ENCODE measurements at regions of chr1 and their contacts with region 1.

Region 1: DNA sequence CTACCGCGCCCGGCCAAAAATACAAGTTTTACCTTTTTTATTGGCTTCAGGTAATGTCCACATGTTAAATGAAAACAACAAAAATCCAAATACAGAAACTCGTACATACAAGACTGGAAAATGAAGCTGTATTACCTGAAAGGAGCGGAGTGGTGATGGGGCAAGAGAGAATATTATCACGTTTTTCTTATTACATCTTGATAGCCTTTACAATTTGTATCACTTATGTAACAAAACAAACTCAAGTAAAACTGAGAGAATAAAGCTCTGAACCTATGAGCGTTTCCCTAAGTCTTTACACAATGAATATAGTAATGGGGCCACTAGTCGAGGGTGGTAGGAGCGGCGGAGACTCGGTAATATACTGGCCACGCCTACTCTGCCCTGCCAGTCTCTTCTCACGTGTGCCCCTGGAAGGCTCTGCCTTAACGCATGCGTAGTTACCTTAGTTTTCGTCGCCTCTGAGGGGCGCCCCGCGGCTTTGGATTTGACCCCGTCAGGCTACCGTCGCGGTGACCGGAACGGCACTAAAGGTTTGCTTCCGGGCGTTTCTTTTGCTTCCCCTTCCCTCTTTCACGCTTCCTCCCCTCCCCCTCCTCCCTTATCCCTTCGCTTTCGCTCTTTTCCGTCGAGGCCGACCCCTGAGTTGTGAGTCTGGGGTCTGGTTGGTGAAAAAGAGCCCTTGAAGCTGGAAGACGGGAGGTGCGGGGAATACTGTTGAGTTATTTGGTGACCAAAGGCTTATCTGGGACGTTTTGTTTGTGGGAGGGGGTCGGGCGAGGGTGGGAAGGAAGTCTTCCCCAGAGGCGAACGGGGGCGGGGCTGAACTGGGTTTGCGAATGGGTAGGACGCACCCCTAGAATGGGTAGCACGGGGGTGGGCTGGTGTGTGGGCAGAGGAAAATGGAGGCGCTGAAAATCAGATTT is at the start of gene SETDB1:
- DNase-seq: peak; percentile 79 to 97 (median 88)
- ATAC-seq: peak; percentile 93
- H3K4me3 ChIP-seq: peak within 1 kb of the TSS; percentile 89
- H3K4me3 Mint-ChIP-seq: peak within 1 kb of the TSS; percentile 94
- H3K27ac ChIP-seq: peak within 1 kb of the TSS; percentile 86 to 88
- H3K27ac Mint-ChIP-seq: peak within 1 kb of the TSS; percentile 92
- H3K4me1 ChIP-seq: peaks cover 15% of the 10 kb centered on the region
- H3K4me1 Mint-ChIP-seq: peaks cover 33% of the 10 kb centered on the region
- H3K27me3 ChIP-seq: no peaks in the 10 kb centered on the region
- H3K27me3 Mint-ChIP-seq: no peaks in the 10 kb centered on the region
- CTCF ChIP-seq: no peak
- total RNA-seq, gene SETDB1: 39.4 to 40.4 TPM

Region 2: GRCh38 chr1:150464422-150464826 is 461.7 kb before region 1 on chr1:
- CTCF ChIA-PET with region 1: no interaction called
- POLR2A ChIA-PET with region 1: no interaction called
- intact Hi-C with region 1: loop called in 1 of 2 experiments (anchors 5 kb)
- DNase-seq: peak; percentile 45 to 85 (median 63)
- ATAC-seq: peak; percentile 94
- H3K4me3 ChIP-seq: no peak overlapping the region
- H3K4me3 Mint-ChIP-seq: no peak overlapping the region
- H3K27ac ChIP-seq: no peak overlapping the region
- H3K27ac Mint-ChIP-seq: peak overlapping the region; percentile 7
- H3K4me1 ChIP-seq: no peaks in the 10 kb centered on the region
- H3K4me1 Mint-ChIP-seq: peaks cover 5% of the 10 kb centered on the region
- H3K27me3 ChIP-seq: no peaks in the 10 kb centered on the region
- H3K27me3 Mint-ChIP-seq: no peaks in the 10 kb centered on the region
- CTCF ChIP-seq: peak; percentile 79

Region 3: GRCh38 chr1:150696590-150697524 is 229.2 kb before region 1 on chr1 and contains the start of gene GOLPH3L:
- CTCF ChIA-PET with region 1: interaction called, 3 read pairs
- POLR2A ChIA-PET with region 1: interaction called, 3 read pairs
- intact Hi-C with region 1: loop called in 1 of 2 experiments (anchors 2 kb)
- DNase-seq: peak; percentile 73 to 98 (median 83)
- ATAC-seq: peak; percentile 99
- H3K4me3 ChIP-seq: peak within 1 kb of the TSS; percentile 69
- H3K4me3 Mint-ChIP-seq: peak within 1 kb of the TSS; percentile 94
- H3K27ac ChIP-seq: peak within 1 kb of the TSS; percentile 39 to 62
- H3K27ac Mint-ChIP-seq: peak within 1 kb of the TSS; percentile 88
- H3K4me1 ChIP-seq: no peaks in the 10 kb centered on the region
- H3K4me1 Mint-ChIP-seq: peaks cover 40% of the 10 kb centered on the region
- H3K27me3 ChIP-seq: no peaks in the 10 kb centered on the region
- H3K27me3 Mint-ChIP-seq: peaks cover 4% of the 10 kb centered on the region
- CTCF ChIP-seq: no peak
- total RNA-seq, gene GOLPH3L: 2.4 to 2.6 TPM

Region 4: DNA sequence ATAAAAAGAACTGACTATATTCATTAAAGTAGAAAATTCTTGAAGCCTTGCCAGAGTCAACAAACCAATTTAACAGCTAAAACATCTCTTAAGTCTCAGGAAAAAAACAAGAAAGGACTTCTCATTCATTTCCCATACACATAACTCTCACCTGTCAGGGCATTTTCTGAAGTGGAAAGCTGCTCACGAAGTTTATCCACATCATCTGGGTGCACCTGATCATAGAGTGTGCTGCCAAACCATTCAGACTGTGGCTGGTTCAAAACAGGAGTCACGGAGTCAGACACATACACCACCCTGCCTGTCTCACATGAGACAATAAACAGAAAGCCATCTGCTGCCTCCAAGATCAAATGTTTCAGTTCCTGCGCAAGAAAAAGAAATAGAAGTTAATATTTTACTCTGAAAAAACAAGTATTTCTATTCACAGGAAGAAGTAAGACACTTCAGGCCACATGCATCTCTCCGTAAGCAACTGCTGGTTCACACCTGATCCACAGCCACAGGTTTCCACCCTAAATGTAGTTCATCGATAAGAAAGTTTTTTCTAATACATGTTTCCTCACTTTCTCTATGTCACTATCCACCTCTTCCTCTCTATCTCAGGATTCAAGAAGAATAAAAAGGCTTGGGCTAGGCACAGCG is 89.8 kb before region 1 on chr1:
- CTCF ChIA-PET with region 1: interaction called, 3 read pairs
- POLR2A ChIA-PET with region 1: no interaction called
- intact Hi-C with region 1: loop called (anchors 5 kb)
- DNase-seq: no peak
- ATAC-seq: no peak
- H3K4me3 ChIP-seq: no peak overlapping the region
- H3K4me3 Mint-ChIP-seq: no peak overlapping the region
- H3K27ac ChIP-seq: no peak overlapping the region
- H3K27ac Mint-ChIP-seq: no peak overlapping the region
- H3K4me1 ChIP-seq: peaks cover 8% of the 10 kb centered on the region
- H3K4me1 Mint-ChIP-seq: peaks cover 7% of the 10 kb centered on the region
- H3K27me3 ChIP-seq: no peaks in the 10 kb centered on the region
- H3K27me3 Mint-ChIP-seq: no peaks in the 10 kb centered on the region
- CTCF ChIP-seq: no peak

Region 5: GRCh38 chr1:150841626-150842025 is 84.5 kb before region 1 on chr1:
- CTCF ChIA-PET with region 1: interaction called, 7 read pairs
- POLR2A ChIA-PET with region 1: no interaction called
- intact Hi-C with region 1: loop called (anchors 5 kb)
- DNase-seq: peak in 3 of 14 experiments; percentile 53 to 62 (median 56)
- ATAC-seq: peak; percentile 87
- H3K4me3 ChIP-seq: no peak overlapping the region
- H3K4me3 Mint-ChIP-seq: no peak overlapping the region
- H3K27ac ChIP-seq: no peak overlapping the region
- H3K27ac Mint-ChIP-seq: peak overlapping the region; percentile 77
- H3K4me1 ChIP-seq: peaks cover 8% of the 10 kb centered on the region
- H3K4me1 Mint-ChIP-seq: peaks cover 29% of the 10 kb centered on the region
- H3K27me3 ChIP-seq: no peaks in the 10 kb centered on the region
- H3K27me3 Mint-ChIP-seq: no peaks in the 10 kb centered on the region
- CTCF ChIP-seq: no peak

Region 6: GRCh38 chr1:150876119-150876454 is 50.0 kb before region 1 on chr1:
- CTCF ChIA-PET with region 1: interaction called, 5 read pairs
- POLR2A ChIA-PET with region 1: interaction called, 4 read pairs
- intact Hi-C with region 1: loop called (anchors 2 kb)
- DNase-seq: no peak
- ATAC-seq: no peak
- H3K4me3 ChIP-seq: peak overlapping the region; percentile 79
- H3K4me3 Mint-ChIP-seq: peak overlapping the region; percentile 98
- H3K27ac ChIP-seq: peak overlapping the region; percentile 68 to 86
- H3K27ac Mint-ChIP-seq: peak overlapping the region; percentile 92
- H3K4me1 ChIP-seq: peaks cover 15% of the 10 kb centered on the region
- H3K4me1 Mint-ChIP-seq: peaks cover 43% of the 10 kb centered on the region
- H3K27me3 ChIP-seq: no peaks in the 10 kb centered on the region
- H3K27me3 Mint-ChIP-seq: no peaks in the 10 kb centered on the region
- CTCF ChIP-seq: no peak

Region 7: GRCh38 chr1:150973826-150974579 is 47.9 kb after region 1 on chr1:
- CTCF ChIA-PET with region 1: interaction called, 3 read pairs
- POLR2A ChIA-PET with region 1: interaction called, 3 read pairs
- intact Hi-C with region 1: loop called in 1 of 2 experiments (anchors 2 kb)
- DNase-seq: peak; percentile 5 to 66 (median 27)
- ATAC-seq: peak; percentile 23
- H3K4me3 ChIP-seq: peak overlapping the region; percentile 88
- H3K4me3 Mint-ChIP-seq: peak overlapping the region; percentile 92
- H3K27ac ChIP-seq: peak overlapping the region; percentile 65 to 79
- H3K27ac Mint-ChIP-seq: peak overlapping the region; percentile 92
- H3K4me1 ChIP-seq: peaks cover 79% of the 10 kb centered on the region
- H3K4me1 Mint-ChIP-seq: peaks cover 70% of the 10 kb centered on the region
- H3K27me3 ChIP-seq: no peaks in the 10 kb centered on the region
- H3K27me3 Mint-ChIP-seq: no peaks in the 10 kb centered on the region
- CTCF ChIP-seq: no peak

Measured in CD4-positive, alpha-beta T cell (primary cell).